Transverse colon (tissue), 4 donors: ENCODE measurements at regions of chr13 and their contacts with region 1.

Region 1: DNA sequence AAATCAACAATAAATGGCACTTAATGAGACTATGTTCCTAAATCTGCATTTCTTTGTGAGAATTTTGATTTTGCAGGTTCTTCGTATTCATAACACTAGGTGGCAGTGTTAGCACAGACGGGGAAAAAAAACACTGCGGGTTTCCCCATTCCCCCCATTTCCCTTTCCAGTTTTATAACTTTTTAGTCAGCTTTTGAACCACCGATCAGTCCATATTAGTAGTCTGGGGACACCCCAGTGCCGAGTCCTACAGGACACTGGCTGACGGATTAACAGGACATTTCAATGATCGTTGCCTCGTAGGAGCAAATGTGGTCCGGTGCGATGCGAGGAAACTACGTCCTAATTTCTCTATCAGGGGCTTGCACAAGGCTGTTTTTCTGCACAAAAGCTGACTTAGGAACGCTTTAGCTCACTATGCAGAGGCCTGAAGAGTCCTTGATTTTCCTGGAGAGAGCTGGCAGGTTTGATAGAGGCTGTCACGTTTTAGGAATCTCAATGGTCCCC is 234.3 kb downstream of the LMO7 start:
- DNase-seq: no peak
- H3K4me3 ChIP-seq: peak overlapping the region in 3 of 4 donors; percentile 13 to 37 (median 23)
- H3K27ac ChIP-seq: no peak overlapping the region
- H3K4me1 ChIP-seq: peaks cover 0 to 6% (median 2%) of the 10 kb centered on the region in 4 donors
- H3K27me3 ChIP-seq: peaks cover 6% of the 10 kb centered on the region
- CTCF ChIP-seq: peak; percentile 65 to 78 (median 70)
- EP300 ChIP-seq: no peak
- POLR2A ChIP-seq: no peak

Region 2: DNA sequence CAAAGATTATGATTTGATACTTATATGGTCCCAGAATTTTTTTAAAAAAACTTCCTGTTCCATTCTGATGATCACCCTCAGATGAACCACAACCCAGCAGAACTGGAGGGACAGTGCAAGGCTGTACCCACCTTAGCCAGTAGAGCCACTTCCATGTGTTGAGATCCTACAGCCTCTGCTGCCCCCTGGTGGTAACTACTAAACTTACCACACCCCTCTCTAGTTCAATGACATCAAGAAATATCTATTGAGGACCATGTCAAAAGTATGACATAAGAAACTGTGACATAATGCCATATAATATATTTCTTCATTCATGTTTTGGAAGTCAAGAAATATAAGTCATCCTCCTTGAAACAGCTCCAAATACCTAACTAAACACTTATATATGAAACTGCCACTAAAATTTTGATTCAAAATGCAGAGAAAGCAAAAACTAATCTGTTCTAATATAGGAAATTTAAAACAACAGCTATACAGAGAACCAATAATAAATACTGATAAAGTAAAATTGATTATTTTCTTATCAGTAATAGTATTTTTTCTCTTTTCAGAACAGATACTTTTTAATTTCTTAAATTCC is 603.2 kb after region 1 on chr13:
- in situ Hi-C with region 1: loop called (anchors 5 to 10 kb)
- intact Hi-C with region 1: loop called (anchors 5 kb)
- DNase-seq: peak; percentile 73
- H3K4me3 ChIP-seq: no peak overlapping the region
- H3K27ac ChIP-seq: no peak overlapping the region
- H3K4me1 ChIP-seq: no peaks in the 10 kb centered on the region
- H3K27me3 ChIP-seq: no peaks in the 10 kb centered on the region
- CTCF ChIP-seq: peak; percentile 84 to 92 (median 85)
- EP300 ChIP-seq: no peak
- POLR2A ChIP-seq: no peak